Mucosa of descending colon (tissue), 3 donors: ENCODE measurements at regions of chr6 and their contacts with region 1.

Region 1: DNA sequence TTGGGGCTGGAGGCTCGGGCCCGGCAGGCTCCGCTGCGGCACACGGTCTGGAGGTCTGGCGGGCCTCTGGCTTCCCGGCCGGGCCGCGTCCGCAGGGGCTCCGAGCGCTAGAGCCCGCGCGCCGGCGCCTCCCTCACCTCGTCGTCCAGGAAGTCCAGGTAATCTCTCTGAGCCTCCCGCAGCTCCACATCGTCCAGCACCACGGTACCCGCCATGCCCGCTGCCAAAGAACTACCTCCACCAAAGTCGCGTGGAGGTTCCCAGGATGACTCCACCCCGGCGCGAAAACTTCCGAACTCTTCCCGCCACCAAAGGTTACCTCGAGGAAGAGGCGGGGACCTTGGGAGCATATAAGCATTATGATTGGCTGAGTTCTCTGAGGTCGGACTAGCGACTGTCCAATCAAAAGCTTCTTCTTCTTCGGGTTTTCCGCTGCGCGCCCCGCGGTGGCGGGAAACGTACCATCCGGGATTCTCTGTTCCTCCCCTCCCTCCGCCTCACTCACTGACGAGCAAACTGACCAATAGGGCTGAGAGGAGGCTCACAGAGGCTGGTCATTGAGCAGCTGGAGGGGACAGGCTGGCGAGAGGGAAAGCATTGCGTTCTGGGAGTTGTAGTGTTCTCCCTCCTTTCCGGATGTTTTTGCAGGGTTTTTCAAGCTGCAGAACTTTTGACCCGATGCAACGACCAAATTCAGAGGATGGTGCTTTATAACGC is at the start of gene MCM3:
- DNase-seq: peak; percentile 96 to 98 (median 97)
- ATAC-seq: peak; percentile 99
- H3K4me3 ChIP-seq: peak within 1 kb of the TSS; percentile 46
- H3K4me1 ChIP-seq: peaks cover 8% of the 10 kb centered on the region
- CTCF ChIP-seq: peak; percentile 11
- total RNA-seq, gene MCM3: 32.1 to 43.6 (median 36.7) TPM

Region 2: GRCh38 chr6:52399511-52400312 is 115.1 kb after region 1 on chr6:
- intact Hi-C with region 1: loop called in 1 of 2 experiments (anchors 10 kb)
- DNase-seq: peak in 1 of 3 donors; percentile 69
- ATAC-seq: peak; percentile 60
- H3K4me3 ChIP-seq: no peak overlapping the region
- H3K4me1 ChIP-seq: peaks cover 52% of the 10 kb centered on the region
- CTCF ChIP-seq: peak; percentile 71

Region 3: DNA sequence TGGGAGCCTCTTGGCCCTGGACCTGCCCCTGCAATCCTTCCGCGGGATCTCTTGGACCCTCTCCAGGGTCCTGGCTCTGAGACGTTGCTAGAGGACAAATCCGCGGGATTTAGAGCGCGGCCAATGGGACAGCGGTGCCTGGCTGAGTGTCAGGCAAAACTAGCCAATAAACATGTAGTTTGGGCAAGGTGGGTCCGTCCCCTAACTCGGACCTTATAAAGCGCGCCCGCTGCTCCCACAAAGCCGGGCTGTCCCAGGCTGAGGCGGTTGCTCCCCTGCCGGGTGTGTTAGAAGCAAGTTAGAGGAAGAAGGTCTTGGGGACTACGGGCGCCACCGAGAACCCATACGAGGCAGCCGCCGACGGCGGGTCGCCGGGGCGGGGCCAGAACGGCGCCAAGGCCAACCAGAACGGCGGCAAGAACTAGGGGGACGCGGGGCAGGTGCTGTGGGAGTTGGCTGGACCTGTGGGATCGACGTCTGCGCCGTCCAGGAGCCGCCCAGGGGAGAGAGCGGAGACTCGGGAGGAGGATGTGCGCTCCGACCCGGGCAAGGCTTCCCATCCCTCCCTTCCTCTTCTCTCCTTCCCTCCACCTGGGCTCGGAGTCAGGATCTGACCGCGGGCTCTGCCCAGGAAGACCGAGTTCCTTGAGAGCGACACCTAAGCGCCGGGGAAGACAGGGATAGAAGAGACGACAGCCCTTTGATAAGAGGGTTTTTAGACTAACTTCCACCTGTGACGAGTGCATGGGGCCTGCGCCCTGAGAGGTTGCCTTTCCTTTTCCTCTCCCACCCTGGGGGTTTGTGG is 379.8 kb after region 1 on chr6:
- intact Hi-C with region 1: loop called in 1 of 2 experiments (anchors 10 kb)
- DNase-seq: peak; percentile 91 to 94 (median 92)
- ATAC-seq: peak; percentile 98
- H3K4me3 ChIP-seq: peak overlapping the region; percentile 56
- H3K4me1 ChIP-seq: peaks cover 7% of the 10 kb centered on the region
- CTCF ChIP-seq: no peak

Region 4: GRCh38 chr6:52670502-52671409 is 386.1 kb after region 1 on chr6 and contains the start of gene TMEM14A:
- intact Hi-C with region 1: loop called (anchors 10 kb)
- DNase-seq: peak; percentile 94 to 99 (median 97)
- ATAC-seq: peak; percentile 100
- H3K4me3 ChIP-seq: peak within 1 kb of the TSS; percentile 32
- H3K4me1 ChIP-seq: no peaks in the 10 kb centered on the region
- CTCF ChIP-seq: no peak
- total RNA-seq, gene TMEM14A: 14.1 to 18.5 (median 17.7) TPM

Region 5: DNA sequence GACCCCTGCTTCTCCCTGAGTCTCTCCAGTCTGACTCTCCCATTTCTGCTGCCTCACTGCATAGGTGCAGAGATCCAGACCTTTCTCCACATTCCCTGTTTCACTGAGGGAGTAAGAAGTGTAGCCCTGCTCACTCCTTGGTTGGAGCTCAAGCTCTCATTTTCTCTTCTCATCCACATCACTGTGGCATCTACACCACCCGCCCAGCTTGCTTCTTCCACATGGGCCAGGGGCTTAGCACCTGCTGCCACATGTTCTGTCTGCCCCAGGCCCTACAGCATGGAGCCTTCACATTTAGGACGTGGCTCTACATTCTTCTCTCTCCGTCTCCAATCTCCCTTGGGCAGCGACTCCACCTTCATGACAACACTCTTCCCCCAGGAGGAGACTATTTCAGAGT is 564.5 kb after region 1 on chr6:
- intact Hi-C with region 1: no loop called
- DNase-seq: no peak
- ATAC-seq: no peak
- H3K4me3 ChIP-seq: no peak overlapping the region
- H3K4me1 ChIP-seq: no peaks in the 10 kb centered on the region
- CTCF ChIP-seq: no peak